Right cardiac atrium (tissue), 5 donors: ENCODE measurements at regions of chr9 and their contacts with region 1.

Region 1: DNA sequence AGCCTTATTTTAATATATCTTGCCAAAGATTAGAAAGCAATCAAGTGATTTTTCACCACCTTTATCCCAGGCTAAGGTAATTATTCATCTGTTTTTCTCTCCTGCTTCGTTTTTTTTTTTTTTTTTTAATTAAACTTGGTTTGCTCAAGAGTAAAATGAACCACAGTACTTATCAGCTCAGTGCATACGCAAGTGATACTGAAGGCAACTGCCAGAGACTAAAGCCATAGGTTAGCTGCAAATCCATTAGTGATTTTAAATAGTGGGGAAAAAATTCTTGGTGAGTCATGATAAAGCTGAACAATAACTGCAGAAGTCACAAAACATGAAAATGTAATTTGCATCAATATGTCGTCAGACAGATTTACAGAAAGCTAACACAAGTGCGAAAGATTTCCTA is 829.1 kb downstream of the PTPRD start:
- DNase-seq: no peak
- ATAC-seq: no peak
- H3K4me3 ChIP-seq: no peak overlapping the region
- H3K27ac ChIP-seq: no peak overlapping the region
- H3K4me1 ChIP-seq: no peaks in the 10 kb centered on the region
- H3K27me3 ChIP-seq: no peaks in the 10 kb centered on the region

Region 2: DNA sequence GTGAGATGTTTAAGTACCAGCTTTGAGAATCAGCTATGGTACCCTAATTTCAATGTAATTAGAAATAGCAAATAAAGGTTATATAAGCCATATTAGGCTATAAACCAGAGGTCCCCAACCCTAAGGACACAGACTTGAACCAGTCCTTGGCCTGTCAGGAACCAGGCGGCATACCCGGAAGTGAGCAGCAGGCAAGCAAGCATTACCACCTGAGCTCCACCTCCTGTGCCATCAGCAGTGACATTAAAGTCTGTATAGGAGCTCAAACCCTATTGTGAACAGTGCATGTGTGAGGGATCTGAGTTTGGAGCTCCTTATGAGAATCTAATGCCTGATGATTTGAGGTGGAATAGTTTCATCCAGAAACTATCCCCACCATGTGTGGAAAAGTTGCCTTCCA is 180.4 kb before region 1 on chr9:
- intact Hi-C with region 1: loop called in 1 of 4 experiments (anchors 10 kb)
- DNase-seq: no peak
- ATAC-seq: no peak
- H3K4me3 ChIP-seq: no peak overlapping the region
- H3K27ac ChIP-seq: no peak overlapping the region
- H3K4me1 ChIP-seq: no peaks in the 10 kb centered on the region
- H3K27me3 ChIP-seq: no peaks in the 10 kb centered on the region